Posterior vena cava (tissue), 2 donors: ENCODE measurements at regions of chr12 and their contacts with region 1.

Region 1: DNA sequence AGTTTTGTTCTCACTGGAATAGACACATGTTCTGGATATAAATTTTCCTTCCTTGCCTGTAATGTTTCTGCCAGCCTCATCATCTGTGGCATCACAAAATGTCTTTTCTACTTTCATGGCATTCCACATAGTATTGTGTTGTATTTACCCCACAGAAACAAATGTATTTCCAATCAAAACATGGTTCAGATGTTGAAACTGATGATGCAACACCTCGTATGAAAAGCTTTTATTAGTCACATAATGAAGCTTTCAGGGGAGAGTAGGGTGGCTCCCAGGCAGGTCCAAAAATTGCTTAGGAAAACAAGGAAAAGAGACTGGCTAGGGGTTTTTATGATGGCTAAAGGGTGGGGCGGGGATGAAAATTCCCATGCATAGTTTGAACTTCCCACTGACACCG is 29.1 kb upstream of the ZNF641 start:
- DNase-seq: no peak

Region 2: GRCh38 chr12:47383942-47384341 is 995.8 kb before region 1 on chr12:
- intact Hi-C with region 1: loop called in 1 of 2 experiments (anchors 5 kb)
- DNase-seq: no peak

Region 3: GRCh38 chr12:47858511-47859266 is 521.1 kb before region 1 on chr12:
- intact Hi-C with region 1: no loop called
- DNase-seq: peak; percentile 67